GM12878 (cell line): ENCODE measurements at regions of chr11 and their contacts with region 1.

Region 1: DNA sequence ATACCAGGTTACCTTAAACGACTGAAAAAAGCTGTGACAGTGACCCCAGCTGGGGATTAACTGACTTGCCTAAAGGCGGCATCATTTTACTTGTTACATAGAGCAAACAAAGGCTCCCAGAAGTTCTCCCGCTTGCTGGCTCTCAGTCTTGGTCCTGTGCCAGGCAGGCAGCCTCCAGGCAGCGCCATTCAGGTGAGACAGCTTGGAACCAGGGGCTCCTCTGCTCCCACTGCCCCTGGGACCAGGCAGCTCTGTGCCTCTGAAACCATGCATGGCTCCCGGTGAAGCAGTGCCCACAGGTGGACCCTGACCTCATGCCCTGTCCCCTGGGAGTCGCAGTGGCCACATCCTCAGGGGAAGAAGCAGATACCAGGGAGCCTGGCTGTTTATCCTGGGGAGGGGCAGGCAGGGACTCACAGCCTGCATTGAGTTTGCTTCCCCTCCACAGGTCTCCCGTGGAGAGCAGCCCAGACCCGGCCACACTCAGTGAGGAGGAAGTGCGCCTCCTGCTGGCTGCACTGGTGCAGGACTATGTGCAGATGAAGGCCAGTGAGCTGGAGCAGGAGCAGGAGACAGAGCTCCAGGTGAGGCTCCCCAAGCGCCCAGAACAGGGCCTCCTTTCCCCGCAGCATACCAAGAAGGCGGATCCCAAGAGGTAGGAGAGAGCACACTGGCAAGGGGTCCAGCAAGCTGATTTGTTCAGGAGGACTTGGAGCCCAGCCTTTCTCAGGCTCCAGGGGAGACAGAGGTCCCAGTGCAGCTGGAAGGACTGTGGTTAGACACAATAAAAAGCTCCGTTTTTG is 15.6 kb upstream of the CYP2R1 start:
- DNase-seq: no peak
- ATAC-seq: peak; percentile 84
- H3K4me3 ChIP-seq: no peak overlapping the region
- H3K27ac ChIP-seq: no peak overlapping the region
- H3K4me1 ChIP-seq: peaks cover 10% of the 10 kb centered on the region
- H3K27me3 ChIP-seq: no peaks in the 10 kb centered on the region
- CTCF ChIP-seq: peak; percentile 58 to 90 (median 81)
- EP300 ChIP-seq: no peak
- POLR2A ChIP-seq: no peak
- RAD21 ChIP-seq: peak; percentile 59

Region 2: DNA sequence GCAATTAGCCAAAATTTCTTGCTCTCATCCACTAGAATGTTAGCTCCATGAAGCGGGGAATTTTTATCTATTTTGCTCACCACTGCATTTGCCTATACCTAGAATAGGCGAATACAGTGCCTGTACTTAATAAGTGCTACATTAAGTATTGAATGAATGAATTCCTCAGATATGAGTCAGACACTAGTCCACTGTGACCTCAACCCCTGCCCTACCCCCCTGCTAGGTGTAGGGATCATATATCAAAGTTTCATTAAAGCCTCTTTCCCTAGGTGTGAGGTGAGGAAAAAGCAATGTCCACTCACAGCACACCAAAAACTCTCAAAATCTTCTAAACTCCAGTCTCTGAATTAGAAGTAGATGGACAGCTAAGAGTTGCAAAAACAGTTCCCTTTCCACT is 377.7 kb before region 1 on chr11:
- CTCF ChIA-PET with region 1: interaction called, 37 read pairs
- POLR2A ChIA-PET with region 1: no interaction called
- RAD21 ChIA-PET with region 1: interaction called, 8 read pairs
- SMC1A ChIA-PET with region 1: interaction called, 11 read pairs
- in situ Hi-C with region 1: no loop called
- intact Hi-C with region 1: no loop called
- DNase-seq: no peak
- ATAC-seq: no peak
- H3K4me3 ChIP-seq: no peak overlapping the region
- H3K27ac ChIP-seq: no peak overlapping the region
- H3K4me1 ChIP-seq: no peaks in the 10 kb centered on the region
- H3K27me3 ChIP-seq: no peaks in the 10 kb centered on the region
- CTCF ChIP-seq: no peak
- EP300 ChIP-seq: no peak
- POLR2A ChIP-seq: no peak
- RAD21 ChIP-seq: no peak

Region 3: GRCh38 chr11:14544611-14545010 is 363.0 kb before region 1 on chr11:
- CTCF ChIA-PET with region 1: interaction called, 33 read pairs
- POLR2A ChIA-PET with region 1: no interaction called
- RAD21 ChIA-PET with region 1: interaction called, 3 read pairs
- SMC1A ChIA-PET with region 1: interaction called, 3 read pairs
- in situ Hi-C with region 1: no loop called
- intact Hi-C with region 1: no loop called
- DNase-seq: peak; percentile 17
- ATAC-seq: peak; percentile 90
- H3K4me3 ChIP-seq: no peak overlapping the region
- H3K27ac ChIP-seq: no peak overlapping the region
- H3K4me1 ChIP-seq: no peaks in the 10 kb centered on the region
- H3K27me3 ChIP-seq: no peaks in the 10 kb centered on the region
- CTCF ChIP-seq: no peak
- EP300 ChIP-seq: peak in 1 of 2 experiments; percentile 50; a peak in 1 of 4 replicates
- POLR2A ChIP-seq: no peak
- RAD21 ChIP-seq: no peak

Region 4: GRCh38 chr11:14773755-14774154 is 133.9 kb before region 1 on chr11:
- CTCF ChIA-PET with region 1: interaction called, 5 read pairs
- POLR2A ChIA-PET with region 1: no interaction called
- RAD21 ChIA-PET with region 1: no interaction called
- SMC1A ChIA-PET with region 1: no interaction called
- in situ Hi-C with region 1: no loop called
- intact Hi-C with region 1: loop called (anchors 5 kb)
- DNase-seq: no peak
- ATAC-seq: no peak
- H3K4me3 ChIP-seq: no peak overlapping the region
- H3K27ac ChIP-seq: no peak overlapping the region
- H3K4me1 ChIP-seq: 0 out of 2 replicates have a peak, but pooled peaks cover 2% of the 10 kb centered on the region
- H3K27me3 ChIP-seq: no peaks in the 10 kb centered on the region
- CTCF ChIP-seq: peak in 2 of 3 experiments; percentile 8 to 11; a peak in 1 of 6 replicates
- EP300 ChIP-seq: no peak
- POLR2A ChIP-seq: no peak
- RAD21 ChIP-seq: no peak

Region 5: GRCh38 chr11:14974515-14975251 is 67.1 kb after region 1 on chr11:
- CTCF ChIA-PET with region 1: interaction called, 14 read pairs
- POLR2A ChIA-PET with region 1: no interaction called
- RAD21 ChIA-PET with region 1: no interaction called
- SMC1A ChIA-PET with region 1: no interaction called
- in situ Hi-C with region 1: no loop called
- intact Hi-C with region 1: no loop called
- DNase-seq: no peak
- ATAC-seq: peak; percentile 80
- H3K4me3 ChIP-seq: no peak overlapping the region
- H3K27ac ChIP-seq: no peak overlapping the region
- H3K4me1 ChIP-seq: no peaks in the 10 kb centered on the region; the same call in 1 of the 2 replicates
- H3K27me3 ChIP-seq: peaks cover 6 to 16% of the 10 kb centered on the region in 2 experiments; a peak in 3 of 4 replicates
- CTCF ChIP-seq: peak; percentile 39 to 68 (median 65)
- EP300 ChIP-seq: no peak
- POLR2A ChIP-seq: no peak
- RAD21 ChIP-seq: peak; percentile 25; the same call in 1 of the 2 replicates

Region 6: GRCh38 chr11:15074206-15075161 is 166.9 kb after region 1 on chr11:
- CTCF ChIA-PET with region 1: interaction called, 43 read pairs
- POLR2A ChIA-PET with region 1: no interaction called
- RAD21 ChIA-PET with region 1: interaction called, 9 read pairs
- SMC1A ChIA-PET with region 1: interaction called, 22 read pairs
- in situ Hi-C with region 1: loop called (anchors 5 kb)
- intact Hi-C with region 1: loop called (anchors 1 kb)
- DNase-seq: no peak
- ATAC-seq: peak; percentile 99
- H3K4me3 ChIP-seq: no peak overlapping the region
- H3K27ac ChIP-seq: no peak overlapping the region
- H3K4me1 ChIP-seq: no peaks in the 10 kb centered on the region
- H3K27me3 ChIP-seq: 0 out of 4 replicates have a peak, but pooled peaks cover 0 to 2% of the 10 kb centered on the region in 2 experiments
- CTCF ChIP-seq: peak; percentile 67 to 88 (median 75)
- EP300 ChIP-seq: no peak
- POLR2A ChIP-seq: no peak
- RAD21 ChIP-seq: peak; percentile 65